H1 (cell line): ENCODE measurements at regions of chr3 and their contacts with region 1.

Region 1: DNA sequence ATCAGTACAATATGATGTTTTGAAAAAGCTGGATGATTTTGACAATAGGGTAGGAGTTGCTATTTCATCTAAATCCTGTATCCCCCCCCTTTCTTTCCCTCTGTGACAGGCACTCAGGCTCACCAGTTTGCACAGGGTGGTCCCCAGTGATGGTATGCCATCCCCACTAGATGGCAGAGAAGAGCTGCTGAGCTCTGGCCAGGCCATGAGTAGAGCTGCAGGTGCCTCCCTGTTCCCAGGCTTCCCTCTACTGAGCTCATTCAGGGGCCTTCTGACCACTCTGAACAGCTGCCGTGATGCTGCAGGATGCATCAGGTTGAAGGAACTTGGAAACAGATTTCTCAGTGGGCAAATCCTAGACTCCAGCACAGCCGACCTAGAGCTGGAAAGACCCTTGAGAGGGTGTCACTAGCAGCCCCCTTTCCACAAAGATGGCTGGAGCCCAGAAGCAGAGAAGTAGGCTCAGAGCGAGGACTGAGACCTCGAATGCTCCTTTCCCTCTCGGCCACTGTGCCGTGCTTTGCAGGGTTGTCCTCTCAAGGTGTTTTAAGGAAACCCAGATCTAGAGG is 45.1 kb downstream of the EFCAB12 start:
- DNase-seq: peak; percentile 39 to 75
- H3K4me3 ChIP-seq: no peak overlapping the region
- H3K27ac ChIP-seq: no peak overlapping the region
- H3K4me1 ChIP-seq: no peaks in the 10 kb centered on the region; a peak in 2 of 7 replicates
- H3K27me3 ChIP-seq: no peaks in the 10 kb centered on the region
- CTCF ChIP-seq: peak; percentile 81 to 93 (median 93)
- EP300 ChIP-seq: no peak
- POLR2A ChIP-seq: no peak
- RAD21 ChIP-seq: peak; percentile 87 to 92

Region 2: DNA sequence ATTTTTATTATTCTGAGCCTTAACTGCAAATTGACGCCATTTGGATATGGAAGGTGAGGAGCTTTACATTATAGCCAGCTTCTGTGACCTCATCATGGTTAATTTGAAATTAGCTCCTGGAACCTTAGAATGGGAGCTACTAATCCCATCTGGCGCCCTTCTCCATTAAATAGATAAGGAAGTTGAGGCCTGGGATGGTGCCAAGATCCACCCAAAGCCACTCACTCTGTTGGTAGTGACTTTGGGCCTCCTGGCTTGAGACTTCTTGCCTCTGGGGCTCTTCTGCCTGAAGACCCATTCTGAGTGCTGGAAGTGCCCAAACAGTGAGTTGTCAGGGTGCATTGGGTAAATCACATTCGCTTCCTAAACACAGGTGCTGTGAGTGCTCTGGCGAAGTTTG is 116.7 kb before region 1 on chr3:
- CTCF ChIA-PET with region 1: no interaction called
- POLR2A ChIA-PET with region 1: no interaction called
- DNase-seq: no peak
- H3K4me3 ChIP-seq: no peak overlapping the region
- H3K27ac ChIP-seq: no peak overlapping the region
- H3K4me1 ChIP-seq: no peaks in the 10 kb centered on the region
- H3K27me3 ChIP-seq: no peaks in the 10 kb centered on the region
- CTCF ChIP-seq: no peak
- EP300 ChIP-seq: no peak
- POLR2A ChIP-seq: no peak
- RAD21 ChIP-seq: no peak

Region 3: DNA sequence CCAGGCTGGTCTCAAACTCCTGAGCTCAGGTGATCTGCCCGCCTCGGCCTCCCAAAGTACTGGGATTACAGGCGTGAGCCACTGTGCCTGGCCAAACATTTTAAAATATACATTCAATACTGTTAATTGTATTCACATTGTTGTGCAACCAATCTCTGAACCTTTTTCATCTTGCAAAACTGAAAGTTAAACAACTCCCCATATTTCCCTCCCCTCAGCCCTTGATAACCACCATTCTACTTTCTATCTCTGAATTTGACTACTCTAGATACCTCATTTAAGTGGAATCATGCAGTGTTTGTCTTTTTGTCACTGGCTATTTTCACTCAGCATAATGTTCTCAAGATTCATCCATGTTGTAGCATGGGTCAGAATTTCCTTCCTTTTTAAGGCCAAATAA is 74.7 kb before region 1 on chr3:
- CTCF ChIA-PET with region 1: no interaction called
- POLR2A ChIA-PET with region 1: no interaction called
- DNase-seq: no peak
- H3K4me3 ChIP-seq: no peak overlapping the region
- H3K27ac ChIP-seq: no peak overlapping the region
- H3K4me1 ChIP-seq: peaks cover 3 to 8% (median 5%) of the 10 kb centered on the region in 4 experiments
- H3K27me3 ChIP-seq: no peaks in the 10 kb centered on the region
- CTCF ChIP-seq: no peak
- EP300 ChIP-seq: no peak
- POLR2A ChIP-seq: no peak
- RAD21 ChIP-seq: no peak

Region 4: GRCh38 chr3:129352045-129352444 is 31.3 kb before region 1 on chr3:
- CTCF ChIA-PET with region 1: interaction called, 14 read pairs
- POLR2A ChIA-PET with region 1: interaction called, 3 read pairs
- DNase-seq: peak in 1 of 2 experiments; percentile 62
- H3K4me3 ChIP-seq: no peak overlapping the region
- H3K27ac ChIP-seq: no peak overlapping the region
- H3K4me1 ChIP-seq: peaks cover 0 to 7% (median 1%) of the 10 kb centered on the region in 4 experiments; a peak in 3 of 7 replicates
- H3K27me3 ChIP-seq: no peaks in the 10 kb centered on the region
- CTCF ChIP-seq: peak; percentile 43 to 67 (median 59)
- EP300 ChIP-seq: no peak
- POLR2A ChIP-seq: no peak
- RAD21 ChIP-seq: peak in 1 of 2 experiments; percentile 33; a peak in 2 of 4 replicates

Region 5: DNA sequence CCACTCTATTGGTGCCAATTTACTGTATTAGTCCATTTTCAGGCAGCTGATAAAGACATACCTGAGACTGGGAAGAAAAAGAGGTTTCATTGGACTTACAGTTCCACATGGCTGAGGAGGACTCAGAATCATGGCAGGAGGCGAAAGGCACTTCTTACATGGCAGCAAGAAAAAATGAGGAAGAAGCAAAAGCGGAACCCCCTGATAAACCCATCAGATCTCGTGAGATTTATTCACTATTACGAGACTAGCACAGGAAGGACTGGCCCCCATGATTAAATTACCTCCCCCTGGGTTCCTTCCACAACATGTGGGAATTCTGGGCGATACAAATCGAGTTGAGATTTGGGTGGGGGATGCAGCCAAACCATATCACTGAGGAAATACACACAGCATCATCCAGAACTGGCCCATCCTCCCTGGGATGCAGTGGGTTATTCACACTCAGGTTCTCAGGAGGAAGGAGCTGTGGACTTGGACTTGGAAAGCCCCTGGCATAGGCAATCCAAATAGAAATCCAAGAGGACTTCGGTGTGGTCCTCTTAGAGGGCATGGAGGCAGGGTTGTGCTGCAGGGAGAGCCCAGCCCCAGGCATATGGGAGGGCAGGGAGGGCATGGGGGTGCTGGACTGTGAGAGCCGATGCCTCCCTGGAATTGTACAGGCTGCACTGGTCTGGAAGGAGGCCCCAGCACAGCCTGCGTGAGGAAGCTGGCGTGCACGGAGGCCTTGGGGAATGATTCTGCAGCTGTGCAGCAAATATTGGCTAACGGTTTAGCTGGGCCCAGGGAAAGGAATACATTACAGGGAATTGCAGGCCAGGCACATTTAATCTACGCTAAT is 17.9 kb before region 1 on chr3:
- CTCF ChIA-PET with region 1: interaction called, 11 read pairs
- POLR2A ChIA-PET with region 1: no interaction called
- DNase-seq: no peak
- H3K4me3 ChIP-seq: no peak overlapping the region
- H3K27ac ChIP-seq: no peak overlapping the region
- H3K4me1 ChIP-seq: no peaks in the 10 kb centered on the region; a peak in 1 of 7 replicates
- H3K27me3 ChIP-seq: no peaks in the 10 kb centered on the region
- CTCF ChIP-seq: no peak
- EP300 ChIP-seq: no peak
- POLR2A ChIP-seq: no peak
- RAD21 ChIP-seq: no peak

Region 6: GRCh38 chr3:129371041-129371826 is 12.1 kb before region 1 on chr3:
- CTCF ChIA-PET with region 1: interaction called, 19 read pairs
- POLR2A ChIA-PET with region 1: interaction called, 8 read pairs
- DNase-seq: no peak
- H3K4me3 ChIP-seq: no peak overlapping the region
- H3K27ac ChIP-seq: no peak overlapping the region; the same call in 1 of the 2 replicates
- H3K4me1 ChIP-seq: no peaks in the 10 kb centered on the region; a peak in 1 of 7 replicates
- H3K27me3 ChIP-seq: no peaks in the 10 kb centered on the region
- CTCF ChIP-seq: no peak
- EP300 ChIP-seq: no peak
- POLR2A ChIP-seq: no peak
- RAD21 ChIP-seq: no peak

Region 7: DNA sequence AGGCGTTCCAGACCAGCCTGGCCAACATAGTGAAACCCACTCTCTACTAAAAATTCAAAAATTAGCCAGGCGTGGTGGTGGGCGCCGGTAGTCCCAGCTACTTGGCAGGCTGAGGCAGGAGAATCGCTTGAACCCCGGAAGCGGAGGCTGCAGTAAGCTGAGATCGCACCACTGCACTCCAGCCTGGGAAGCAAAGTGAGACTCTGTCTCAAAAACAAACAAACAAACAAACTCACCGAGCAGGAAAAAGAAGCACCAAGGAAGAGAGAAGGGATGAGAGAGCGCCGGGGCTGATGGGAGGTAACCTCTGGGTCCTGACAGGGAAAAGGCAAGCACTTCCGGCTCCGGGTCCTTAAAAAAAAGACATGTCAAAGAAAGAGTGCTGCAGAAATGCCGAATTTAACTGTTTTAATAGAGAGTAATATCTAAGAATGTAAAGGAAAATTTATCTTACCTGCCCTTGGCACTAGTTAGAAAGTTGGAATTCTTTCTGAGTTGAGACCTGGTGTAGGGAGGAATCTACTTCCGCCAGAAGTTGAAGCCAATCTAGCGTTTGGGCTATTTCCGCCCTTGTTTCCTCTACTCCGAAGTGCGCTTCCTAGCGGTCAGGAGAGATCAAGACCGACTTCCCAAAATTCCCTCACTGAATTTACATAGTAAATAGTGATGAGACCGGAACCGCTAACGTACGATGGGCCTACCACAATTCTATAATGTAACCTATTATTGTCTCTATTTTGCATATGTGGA is 15.9 kb after region 1 on chr3:
- CTCF ChIA-PET with region 1: interaction called, 58 read pairs
- POLR2A ChIA-PET with region 1: interaction called, 5 read pairs
- DNase-seq: peak; percentile 63 to 72
- H3K4me3 ChIP-seq: peak overlapping the region; percentile 61 to 89 (median 83)
- H3K27ac ChIP-seq: peak overlapping the region; percentile 72
- H3K4me1 ChIP-seq: peaks cover 0 to 4% (median 0%) of the 10 kb centered on the region in 4 experiments; a peak in 3 of 7 replicates
- H3K27me3 ChIP-seq: no peaks in the 10 kb centered on the region; a peak in 1 of 7 replicates
- CTCF ChIP-seq: peak; percentile 58 to 85 (median 65)
- EP300 ChIP-seq: no peak
- POLR2A ChIP-seq: no peak
- RAD21 ChIP-seq: peak in 1 of 2 experiments; percentile 37; a peak in 2 of 4 replicates

Region 8: GRCh38 chr3:129413687-129414506 is 30.5 kb after region 1 on chr3:
- CTCF ChIA-PET with region 1: interaction called, 12 read pairs
- POLR2A ChIA-PET with region 1: interaction called, 3 read pairs
- DNase-seq: no peak
- H3K4me3 ChIP-seq: no peak overlapping the region
- H3K27ac ChIP-seq: no peak overlapping the region
- H3K4me1 ChIP-seq: no peaks in the 10 kb centered on the region; a peak in 1 of 7 replicates
- H3K27me3 ChIP-seq: peaks cover 0 to 5% (median 0%) of the 10 kb centered on the region in 4 experiments; a peak in 2 of 7 replicates
- CTCF ChIP-seq: no peak
- EP300 ChIP-seq: no peak
- POLR2A ChIP-seq: no peak
- RAD21 ChIP-seq: no peak

Region 9: DNA sequence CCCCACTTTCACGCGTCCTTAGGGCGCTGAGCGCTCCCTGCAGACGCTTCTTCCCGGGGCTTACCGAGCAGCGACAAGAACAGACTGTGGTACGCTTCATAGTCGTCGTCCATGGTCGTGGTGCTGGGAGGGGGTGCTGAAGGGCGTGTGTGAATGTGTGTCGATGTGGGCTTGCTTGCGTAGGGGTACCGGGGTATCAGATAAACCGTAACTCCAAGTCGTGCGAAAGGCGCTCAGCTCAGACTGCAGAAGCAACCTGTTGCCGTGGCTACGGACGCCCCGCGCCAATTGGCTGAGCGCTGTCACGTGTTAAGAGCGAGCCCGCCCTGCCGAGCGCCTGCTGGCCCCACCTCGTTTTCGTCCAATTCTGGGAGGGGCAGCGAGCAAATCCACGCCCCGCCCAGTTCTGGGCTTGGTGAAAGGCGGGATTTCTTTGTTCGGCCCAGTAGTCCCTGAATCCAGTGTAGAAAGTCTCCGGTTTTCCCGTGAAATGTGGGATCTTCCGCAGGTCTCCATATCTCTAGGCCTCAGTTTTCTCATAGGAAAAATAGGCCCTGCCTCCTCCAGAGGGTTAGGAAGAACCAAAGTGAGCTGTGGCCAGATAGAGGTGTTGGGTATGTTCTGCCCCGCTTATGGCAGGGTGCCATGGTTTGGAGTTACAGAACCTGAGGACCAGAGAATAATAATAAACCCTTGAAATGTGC is 45.2 kb after region 1 on chr3 and contains the start of gene EFCAB12:
- CTCF ChIA-PET with region 1: interaction called, 11 read pairs
- POLR2A ChIA-PET with region 1: interaction called, 7 read pairs
- DNase-seq: peak; percentile 89 to 98
- H3K4me3 ChIP-seq: peak within 1 kb of the TSS; percentile 41 to 73 (median 60)
- H3K27ac ChIP-seq: peak within 1 kb of the TSS; percentile 75
- H3K4me1 ChIP-seq: peaks cover 7 to 31% (median 15%) of the 10 kb centered on the region in 4 experiments
- H3K27me3 ChIP-seq: peaks cover 0 to 10% (median 8%) of the 10 kb centered on the region in 4 experiments; a peak in 5 of 7 replicates
- CTCF ChIP-seq: no peak
- EP300 ChIP-seq: no peak
- POLR2A ChIP-seq: peak in 1 of 2 experiments; percentile 73; a peak in 2 of 3 replicates
- RAD21 ChIP-seq: no peak
- total RNA-seq, gene EFCAB12: 0.75 and 0.99 TPM in 2 replicates

Region 10: DNA sequence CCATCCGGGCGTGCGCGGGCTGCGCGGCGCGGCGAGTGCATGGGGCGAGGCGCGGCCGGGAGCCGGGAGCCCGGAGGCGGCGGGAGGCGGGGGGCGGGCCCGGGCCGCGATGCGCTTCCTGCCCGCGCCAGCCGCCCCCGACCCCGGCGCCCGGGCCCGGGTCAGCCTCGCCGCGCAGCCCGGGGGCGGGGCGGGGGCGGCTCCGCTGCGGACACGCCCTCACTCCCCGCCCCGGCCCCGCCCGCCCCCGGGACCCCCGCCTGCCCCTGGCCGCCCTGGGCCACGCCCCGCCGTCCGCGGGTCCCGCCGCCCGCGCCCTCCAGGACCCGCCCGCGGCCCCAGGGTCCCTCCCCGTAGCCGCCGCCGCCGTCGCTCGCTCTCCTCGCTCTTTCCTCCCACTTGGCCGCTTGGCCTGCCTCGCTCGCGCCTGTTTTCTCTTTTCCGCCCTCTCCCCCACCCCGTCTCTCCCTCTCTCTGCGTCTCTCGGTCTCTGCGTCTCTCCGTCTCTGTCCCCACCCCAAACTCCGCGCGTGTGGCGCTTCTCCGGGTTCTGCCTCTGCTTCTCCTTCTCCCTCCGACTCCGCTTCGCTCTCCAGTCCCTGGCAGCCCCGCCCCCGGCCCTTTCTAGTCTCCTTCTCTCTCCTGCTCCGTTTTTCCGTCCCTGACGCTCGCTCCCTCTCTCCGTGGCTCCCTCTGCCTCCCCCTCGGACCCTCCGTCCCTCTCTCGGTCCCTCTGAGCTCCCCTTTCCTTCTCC is 223.4 kb after region 1 on chr3 and contains the start of gene PLXND1:
- CTCF ChIA-PET with region 1: no interaction called
- POLR2A ChIA-PET with region 1: no interaction called
- DNase-seq: peak in 1 of 2 experiments; percentile 78
- H3K4me3 ChIP-seq: peak within 1 kb of the TSS; percentile 46 to 76 (median 62)
- H3K27ac ChIP-seq: no peak within 1 kb of the TSS
- H3K4me1 ChIP-seq: peaks cover 4 to 52% (median 43%) of the 10 kb centered on the region in 4 experiments
- H3K27me3 ChIP-seq: peaks cover 7 to 31% (median 22%) of the 10 kb centered on the region in 4 experiments; a peak in 6 of 7 replicates
- CTCF ChIP-seq: no peak
- EP300 ChIP-seq: no peak
- POLR2A ChIP-seq: no peak
- RAD21 ChIP-seq: no peak
- total RNA-seq, gene PLXND1: 60.2 and 66.4 TPM in 2 replicates